ENCODE measurements at regions of chr12 and their contacts with region 1.

Region 1: DNA sequence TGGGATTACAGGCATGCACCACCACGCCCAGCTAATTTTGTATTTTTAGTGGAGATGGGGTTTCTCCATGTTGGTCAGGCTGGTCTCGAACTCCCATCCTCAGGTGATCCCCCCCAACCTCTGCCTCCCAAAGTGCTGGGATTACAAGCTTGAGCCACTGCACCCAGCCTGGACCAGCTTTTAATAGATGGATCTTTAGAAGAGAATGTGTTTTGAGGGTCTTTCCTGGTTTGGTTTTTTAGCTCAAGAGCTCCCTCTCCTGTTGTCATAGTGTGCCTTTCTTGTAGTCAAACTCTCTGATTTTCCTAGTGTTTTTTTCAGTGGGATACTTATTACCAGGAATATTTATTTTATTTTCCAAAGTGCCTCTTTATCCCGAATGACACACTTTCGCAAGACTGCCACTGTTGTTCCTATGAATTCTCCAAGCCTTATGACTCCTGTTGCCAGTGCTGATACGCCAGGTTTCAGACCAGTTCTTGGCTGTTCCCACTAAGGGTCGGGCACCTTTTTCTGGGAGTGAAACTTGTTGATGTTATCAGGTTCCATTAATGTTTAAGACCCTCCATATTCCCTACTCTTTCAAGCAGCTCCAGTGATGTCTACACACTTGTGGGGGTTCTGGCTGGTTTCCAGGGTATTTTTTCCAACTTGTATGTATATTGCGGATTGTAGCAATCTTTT is 31.5 kb upstream of the LIMA1 start:
- DNase-seq: peak; percentile 39
- H3K4me3 Mint-ChIP-seq: no peak overlapping the region
- H3K27ac Mint-ChIP-seq: no peak overlapping the region
- H3K4me1 Mint-ChIP-seq: peaks cover 5% of the 10 kb centered on the region
- H3K27me3 Mint-ChIP-seq: no peaks in the 10 kb centered on the region
- CTCF ChIP-seq: peak; percentile 58

Region 2: DNA sequence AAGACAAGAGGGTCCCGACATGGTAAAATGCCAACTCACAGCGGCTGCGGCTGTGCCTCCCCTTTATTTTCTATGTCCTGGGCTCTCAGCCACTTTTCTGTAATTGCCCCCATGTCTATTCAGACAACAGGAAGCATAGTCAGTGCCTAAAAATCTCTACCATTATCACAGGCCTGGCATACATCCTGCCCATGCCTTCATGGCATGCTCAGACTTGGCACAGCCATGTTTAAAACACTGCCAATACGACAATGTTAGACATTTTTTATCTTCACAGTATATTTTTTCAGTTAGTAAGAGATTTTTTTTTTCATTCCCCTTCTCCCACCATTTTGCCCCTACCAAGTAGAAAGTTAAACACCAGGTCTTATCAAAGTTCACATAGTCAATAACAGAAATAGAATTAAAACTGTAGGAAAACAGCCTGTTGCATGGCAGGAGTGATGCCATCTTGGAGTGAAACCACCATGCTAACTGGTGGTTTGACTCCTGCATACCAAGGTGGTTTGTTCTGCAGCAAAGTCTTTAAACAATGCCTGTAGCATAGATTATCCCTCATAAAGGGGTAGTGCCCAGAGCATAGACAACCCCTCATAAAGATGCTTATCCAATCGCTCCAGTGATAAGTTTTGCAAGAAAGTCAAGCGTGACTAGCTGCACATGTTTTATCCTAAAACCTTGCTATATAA is 128.7 kb before region 1 on chr12:
- CTCF ChIA-PET with region 1: interaction called, 19 read pairs
- POLR2A ChIA-PET with region 1: no interaction called
- intact Hi-C with region 1: loop called (anchors 2 kb)
- DNase-seq: peak; percentile 22
- H3K4me3 Mint-ChIP-seq: no peak overlapping the region
- H3K27ac Mint-ChIP-seq: peak overlapping the region; percentile 68
- H3K4me1 Mint-ChIP-seq: peaks cover 33% of the 10 kb centered on the region
- H3K27me3 Mint-ChIP-seq: no peaks in the 10 kb centered on the region
- CTCF ChIP-seq: no peak

Region 3: GRCh38 chr12:50211392-50212070 is 103.2 kb before region 1 on chr12:
- CTCF ChIA-PET with region 1: interaction called, 10 read pairs
- POLR2A ChIA-PET with region 1: no interaction called
- intact Hi-C with region 1: no loop called
- DNase-seq: no peak
- H3K4me3 Mint-ChIP-seq: no peak overlapping the region
- H3K27ac Mint-ChIP-seq: peak overlapping the region; percentile 92
- H3K4me1 Mint-ChIP-seq: peaks cover 23% of the 10 kb centered on the region
- H3K27me3 Mint-ChIP-seq: no peaks in the 10 kb centered on the region
- CTCF ChIP-seq: no peak

Measured in MCF 10A (cell line).